SK-N-SH (cell line): ENCODE measurements at regions of chr11 and their contacts with region 1.

Region 1: GRCh38 chr11:123054301-123055065 is 7.5 kb downstream of the HSPA8 start:
- DNase-seq: peak; percentile 75
- H3K4me3 ChIP-seq: no peak overlapping the region; a peak in 1 of 4 replicates
- H3K27ac ChIP-seq: peak overlapping the region in 1 of 2 experiments; percentile 99; a peak in 2 of 4 replicates
- H3K4me1 ChIP-seq: peaks cover 9 to 24% of the 10 kb centered on the region in 2 experiments; a peak in 3 of 4 replicates
- H3K27me3 ChIP-seq: no peaks in the 10 kb centered on the region
- CTCF ChIP-seq: peak; percentile 80
- EP300 ChIP-seq: no peak
- RAD21 ChIP-seq: peak; percentile 82

Region 2: DNA sequence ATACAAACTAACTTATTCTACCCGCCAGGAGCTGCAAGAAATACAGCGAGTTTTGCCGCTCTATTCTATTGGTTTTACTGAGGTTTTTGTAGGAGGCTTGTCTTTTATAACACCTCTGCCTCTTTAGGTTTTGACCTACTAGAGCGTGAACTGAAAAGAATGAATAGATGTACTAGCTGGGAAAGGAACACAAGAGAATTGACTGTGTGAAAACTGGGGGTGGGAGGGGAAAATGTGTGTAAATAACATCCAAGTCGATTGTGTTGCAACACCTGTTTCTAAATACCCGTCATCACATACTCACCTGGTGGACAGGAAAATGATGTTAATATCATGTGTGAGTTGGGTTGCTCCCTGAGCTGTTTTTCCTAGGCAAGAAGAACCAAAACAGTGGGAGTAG is 184.9 kb before region 1 on chr11:
- CTCF ChIA-PET with region 1: interaction called, 64 read pairs
- POLR2A ChIA-PET with region 1: interaction called, 3 read pairs
- DNase-seq: no peak
- H3K4me3 ChIP-seq: no peak overlapping the region
- H3K27ac ChIP-seq: no peak overlapping the region
- H3K4me1 ChIP-seq: peaks cover 0 to 2% of the 10 kb centered on the region in 2 experiments; a peak in 1 of 4 replicates
- H3K27me3 ChIP-seq: no peaks in the 10 kb centered on the region
- CTCF ChIP-seq: no peak
- EP300 ChIP-seq: no peak
- RAD21 ChIP-seq: no peak

Region 3: GRCh38 chr11:123039605-123040432 is 14.7 kb before region 1 on chr11:
- CTCF ChIA-PET with region 1: interaction called, 30 read pairs
- POLR2A ChIA-PET with region 1: interaction called, 8 read pairs
- DNase-seq: peak; percentile 78
- H3K4me3 ChIP-seq: 0 out of 4 replicates have a peak overlapping the region, but pooled peaks of 1 of the 2 experiments have one; percentile 3
- H3K27ac ChIP-seq: peak overlapping the region; percentile 23 to 72; a peak in 3 of 4 replicates
- H3K4me1 ChIP-seq: peaks cover 9% of the 10 kb centered on the region in 2 experiments; a peak in 2 of 4 replicates
- H3K27me3 ChIP-seq: no peaks in the 10 kb centered on the region
- CTCF ChIP-seq: no peak
- EP300 ChIP-seq: 0 out of 4 replicates have a peak, but pooled peaks of 1 of the 2 experiments have one; percentile 49
- RAD21 ChIP-seq: no peak